GM10248 (cell line): ENCODE measurements at regions of chr18 and their contacts with region 1.

Region 1: GRCh38 chr18:63320046-63320689 is 599 bp upstream of the BCL2 start:
- DNase-seq: peak; percentile 88
- CTCF ChIP-seq: peak; percentile 38

Region 2: DNA sequence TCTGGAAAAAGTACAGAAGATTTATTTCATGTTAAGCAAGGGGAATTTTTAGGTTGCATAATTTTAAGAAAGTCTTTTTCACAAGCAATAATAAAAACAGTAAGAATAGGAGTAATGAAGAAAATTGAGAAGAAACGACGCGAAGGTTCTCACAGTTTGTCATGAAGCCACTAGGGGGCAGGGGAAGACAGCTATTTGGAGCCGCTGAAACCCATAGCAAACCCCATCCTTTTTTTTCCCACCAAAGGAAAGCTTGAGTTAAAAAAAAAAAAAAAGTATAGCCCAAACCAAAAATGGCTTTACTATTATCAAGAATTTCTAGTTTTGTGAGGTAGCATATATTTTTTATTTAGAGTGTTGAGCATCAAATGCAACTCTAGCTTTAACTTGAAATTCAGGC is 303.9 kb before region 1 on chr18:
- CTCF ChIA-PET with region 1: interaction called, 109 read pairs
- POLR2A ChIA-PET with region 1: no interaction called
- DNase-seq: peak; percentile 72
- CTCF ChIP-seq: peak; percentile 66

Region 3: DNA sequence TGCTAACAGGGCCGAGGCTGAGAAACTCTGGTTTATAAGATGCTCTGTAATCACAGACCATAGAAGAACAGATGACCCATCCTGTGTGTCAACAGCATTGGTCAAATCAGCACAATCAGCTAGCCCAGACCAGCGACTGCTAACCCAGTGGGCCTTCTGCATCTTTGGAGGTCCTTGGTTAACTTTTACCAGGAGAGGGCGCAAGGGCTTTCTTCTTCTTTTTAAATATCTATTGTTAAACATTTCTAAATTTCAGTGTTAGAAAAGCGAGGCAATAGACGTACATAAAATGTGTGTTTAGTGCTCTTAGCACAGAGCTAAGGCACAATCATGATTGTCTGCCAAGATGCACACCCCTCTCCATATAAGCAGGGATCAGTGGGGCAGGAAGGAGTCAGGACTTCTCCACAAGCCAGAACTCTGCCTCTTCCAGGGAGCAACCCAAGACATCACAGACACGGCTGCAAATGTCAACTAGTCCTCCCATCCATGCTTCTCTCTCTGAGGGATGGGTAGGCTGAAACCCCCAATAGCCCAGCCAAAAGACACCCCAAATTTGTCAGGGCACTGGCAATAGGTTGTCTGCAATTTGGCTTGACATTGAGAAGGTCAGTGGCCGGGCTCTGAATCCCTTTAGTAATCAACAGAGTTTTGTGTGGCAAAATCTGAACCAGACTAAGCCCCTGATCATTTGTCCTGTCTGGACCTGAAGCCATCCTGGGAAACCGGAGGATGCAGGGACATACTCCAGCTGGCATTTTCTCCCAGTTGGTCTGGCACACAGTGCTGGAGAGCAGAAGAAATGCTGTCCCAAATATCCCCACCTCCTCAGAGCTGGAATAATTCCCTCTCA is 188.8 kb before region 1 on chr18:
- CTCF ChIA-PET with region 1: interaction called, 36 read pairs
- POLR2A ChIA-PET with region 1: interaction called, 3 read pairs
- DNase-seq: no peak
- CTCF ChIP-seq: peak; percentile 47

Region 4: DNA sequence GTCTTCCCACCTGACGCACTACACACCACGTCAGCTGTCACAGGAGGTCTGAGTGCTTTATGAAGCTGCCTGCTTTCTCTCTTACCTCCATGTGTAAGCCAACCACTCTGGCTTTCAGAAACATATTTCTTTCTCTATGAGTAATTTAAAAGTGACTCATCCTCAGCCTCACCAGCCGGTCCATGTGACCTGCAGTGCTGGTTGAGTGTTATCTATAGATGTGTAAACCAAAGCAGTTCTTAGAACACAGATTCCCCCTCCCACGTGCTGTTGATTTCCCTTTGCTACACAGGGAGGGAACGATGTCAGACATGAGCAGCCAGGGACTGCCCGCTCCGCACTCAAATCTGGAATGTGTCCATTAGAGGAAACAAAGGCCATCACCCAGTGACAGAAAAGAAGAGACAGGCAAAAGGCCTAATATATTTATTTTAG is 158.4 kb before region 1 on chr18:
- CTCF ChIA-PET with region 1: interaction called, 61 read pairs
- POLR2A ChIA-PET with region 1: interaction called, 6 read pairs
- DNase-seq: peak; percentile 73
- CTCF ChIP-seq: no peak

Region 5: GRCh38 chr18:63262369-63263335 is 57.5 kb before region 1 on chr18:
- CTCF ChIA-PET with region 1: interaction called, 11 read pairs
- POLR2A ChIA-PET with region 1: no interaction called
- DNase-seq: no peak
- CTCF ChIP-seq: no peak

Region 6: GRCh38 chr18:63299837-63300745 is 20.1 kb before region 1 on chr18:
- CTCF ChIA-PET with region 1: interaction called, 20 read pairs
- POLR2A ChIA-PET with region 1: no interaction called
- DNase-seq: peak; percentile 50
- CTCF ChIP-seq: no peak